ENCODE measurements at regions of chr19 and their contacts with region 1.

Region 1: DNA sequence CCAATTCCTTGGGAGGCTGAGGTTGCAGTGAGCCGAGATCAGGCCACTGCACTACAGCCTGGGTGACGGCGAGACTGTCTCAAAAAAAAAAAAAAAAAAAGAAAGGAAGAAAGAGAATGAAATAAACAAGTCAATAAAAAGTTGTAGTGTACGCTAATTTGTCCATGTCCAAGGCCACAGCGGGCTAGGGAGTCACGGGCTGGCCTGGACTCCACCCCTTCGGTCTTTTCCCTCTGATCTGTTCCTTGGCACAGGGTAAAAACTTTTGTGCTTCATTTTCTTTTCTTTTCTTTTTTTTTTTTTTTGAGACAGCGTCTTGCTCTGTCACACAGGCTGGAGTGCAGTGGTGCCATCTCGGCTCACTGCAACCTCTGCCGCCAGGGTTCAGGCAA is 19.4 kb upstream of the MKNK2 start:
- DNase-seq: no peak
- ATAC-seq: no peak
- H3K4me3 Mint-ChIP-seq: no peak overlapping the region
- H3K27ac Mint-ChIP-seq: no peak overlapping the region
- H3K4me1 Mint-ChIP-seq: peaks cover 6% of the 10 kb centered on the region
- H3K27me3 Mint-ChIP-seq: no peaks in the 10 kb centered on the region

Region 2: DNA sequence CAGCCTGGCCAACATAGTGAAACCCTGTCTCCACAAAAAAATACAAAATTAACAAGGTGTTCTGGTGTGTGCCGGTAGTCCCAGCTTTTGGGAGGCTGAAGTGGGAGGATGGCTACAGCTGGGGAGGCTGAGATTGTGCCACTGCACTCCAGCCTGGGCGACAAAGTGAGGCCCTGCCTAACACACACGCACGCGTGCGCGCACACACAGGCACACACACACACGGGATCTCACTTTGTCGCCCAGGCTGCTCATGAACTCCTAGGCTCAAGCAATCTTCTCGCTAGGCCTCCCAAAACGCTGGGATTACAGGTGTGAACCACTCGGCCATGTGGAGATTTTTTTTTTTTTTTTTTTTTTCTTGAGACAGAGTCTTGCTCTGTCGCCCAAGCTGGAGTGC is 51.7 kb before region 1 on chr19:
- CTCF ChIA-PET with region 1: interaction called, 19 read pairs
- DNase-seq: no peak
- ATAC-seq: no peak
- H3K4me3 Mint-ChIP-seq: no peak overlapping the region
- H3K27ac Mint-ChIP-seq: no peak overlapping the region
- H3K4me1 Mint-ChIP-seq: peaks cover 8% of the 10 kb centered on the region
- H3K27me3 Mint-ChIP-seq: no peaks in the 10 kb centered on the region

Region 3: GRCh38 chr19:2050991-2051772 is 19.2 kb before region 1 on chr19 and contains the start of gene MKNK2:
- CTCF ChIA-PET with region 1: interaction called, 16 read pairs
- DNase-seq: peak; percentile 95
- ATAC-seq: peak; percentile 77
- H3K4me3 Mint-ChIP-seq: peak within 1 kb of the TSS; percentile 86
- H3K27ac Mint-ChIP-seq: peak within 1 kb of the TSS; percentile 94
- H3K4me1 Mint-ChIP-seq: peaks cover 49% of the 10 kb centered on the region
- H3K27me3 Mint-ChIP-seq: no peaks in the 10 kb centered on the region
- total RNA-seq, gene MKNK2: 196 to 201 TPM

Region 4: DNA sequence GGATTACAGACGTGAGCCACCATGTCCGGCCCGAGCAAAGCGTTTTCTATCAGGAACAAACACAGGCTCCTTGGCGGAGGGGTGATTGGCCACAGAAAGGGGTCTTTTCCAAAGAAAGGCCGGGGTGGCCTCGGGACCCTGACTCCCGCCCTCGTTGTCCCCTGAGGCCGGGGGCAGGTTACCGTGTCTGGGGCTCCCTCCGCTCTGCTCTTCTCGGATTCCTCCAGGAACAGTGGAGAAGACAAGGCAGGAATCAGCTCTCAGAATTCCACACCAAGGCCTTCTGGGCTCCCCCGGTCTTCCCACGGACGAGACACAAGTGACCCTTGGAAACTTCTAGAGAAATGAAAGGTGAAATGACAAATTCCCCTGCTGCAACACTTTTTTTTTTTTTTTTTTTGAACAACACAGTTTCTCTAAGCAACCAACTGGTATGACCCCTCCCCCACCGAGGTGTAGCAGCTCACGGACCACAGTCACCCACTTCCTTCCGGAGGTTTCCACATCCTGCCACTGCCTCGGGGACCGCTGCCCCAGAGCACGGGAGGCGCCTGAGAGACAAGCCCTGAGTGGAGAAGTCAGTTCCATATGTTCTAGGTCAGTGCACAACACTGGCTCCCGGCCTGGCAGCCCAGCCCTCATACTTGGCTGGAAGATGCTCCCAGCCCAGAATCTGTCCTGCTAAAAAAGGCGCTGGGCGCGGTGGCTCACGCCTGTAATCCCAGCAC is 14.7 kb after region 1 on chr19:
- CTCF ChIA-PET with region 1: interaction called, 31 read pairs
- DNase-seq: peak; percentile 98
- ATAC-seq: peak; percentile 59
- H3K4me3 Mint-ChIP-seq: peak overlapping the region; percentile 99
- H3K27ac Mint-ChIP-seq: peak overlapping the region; percentile 98
- H3K4me1 Mint-ChIP-seq: peaks cover 64% of the 10 kb centered on the region
- H3K27me3 Mint-ChIP-seq: no peaks in the 10 kb centered on the region

Region 5: GRCh38 chr19:2096480-2097329 is 26.3 kb after region 1 on chr19 and contains the start of gene IZUMO4:
- CTCF ChIA-PET with region 1: interaction called, 11 read pairs
- DNase-seq: peak; percentile 100
- ATAC-seq: peak; percentile 88
- H3K4me3 Mint-ChIP-seq: peak within 1 kb of the TSS; percentile 96
- H3K27ac Mint-ChIP-seq: peak within 1 kb of the TSS; percentile 90
- H3K4me1 Mint-ChIP-seq: peaks cover 33% of the 10 kb centered on the region
- H3K27me3 Mint-ChIP-seq: no peaks in the 10 kb centered on the region
- total RNA-seq, gene IZUMO4: 7.2 to 10.1 TPM

Region 6: GRCh38 chr19:2494444-2495129 is 424.2 kb after region 1 on chr19:
- CTCF ChIA-PET with region 1: no interaction called
- DNase-seq: peak; percentile 70
- ATAC-seq: peak; percentile 84
- H3K4me3 Mint-ChIP-seq: peak overlapping the region; percentile 70
- H3K27ac Mint-ChIP-seq: no peak overlapping the region
- H3K4me1 Mint-ChIP-seq: peaks cover 21% of the 10 kb centered on the region
- H3K27me3 Mint-ChIP-seq: peaks cover 53% of the 10 kb centered on the region

Measured in activated CD8-positive, alpha-beta memory T cell treated with anti-CD3 and anti-CD28 coated beads, Interleukin-2, amount 10 ng/mL, durations not matched to agents 7 days and 5 days (primary cell).